Caco-2 (cell line): ENCODE measurements at regions of chr5 and their contacts with region 1.

Region 1: GRCh38 chr5:132277971-132278911 is 16.0 kb upstream of the SLC22A4 start:
- DNase-seq: peak; percentile 82 to 91
- H3K4me3 ChIP-seq: no peak overlapping the region
- H3K4me3 Mint-ChIP-seq: peak overlapping the region; percentile 13
- H3K27ac Mint-ChIP-seq: peak overlapping the region; percentile 45
- H3K4me1 ChIP-seq: peaks cover 46% of the 10 kb centered on the region
- H3K4me1 Mint-ChIP-seq: peaks cover 50% of the 10 kb centered on the region
- H3K27me3 ChIP-seq: no peaks in the 10 kb centered on the region
- H3K27me3 Mint-ChIP-seq: no peaks in the 10 kb centered on the region
- CTCF ChIP-seq: peak; percentile 13 to 37

Region 2: DNA sequence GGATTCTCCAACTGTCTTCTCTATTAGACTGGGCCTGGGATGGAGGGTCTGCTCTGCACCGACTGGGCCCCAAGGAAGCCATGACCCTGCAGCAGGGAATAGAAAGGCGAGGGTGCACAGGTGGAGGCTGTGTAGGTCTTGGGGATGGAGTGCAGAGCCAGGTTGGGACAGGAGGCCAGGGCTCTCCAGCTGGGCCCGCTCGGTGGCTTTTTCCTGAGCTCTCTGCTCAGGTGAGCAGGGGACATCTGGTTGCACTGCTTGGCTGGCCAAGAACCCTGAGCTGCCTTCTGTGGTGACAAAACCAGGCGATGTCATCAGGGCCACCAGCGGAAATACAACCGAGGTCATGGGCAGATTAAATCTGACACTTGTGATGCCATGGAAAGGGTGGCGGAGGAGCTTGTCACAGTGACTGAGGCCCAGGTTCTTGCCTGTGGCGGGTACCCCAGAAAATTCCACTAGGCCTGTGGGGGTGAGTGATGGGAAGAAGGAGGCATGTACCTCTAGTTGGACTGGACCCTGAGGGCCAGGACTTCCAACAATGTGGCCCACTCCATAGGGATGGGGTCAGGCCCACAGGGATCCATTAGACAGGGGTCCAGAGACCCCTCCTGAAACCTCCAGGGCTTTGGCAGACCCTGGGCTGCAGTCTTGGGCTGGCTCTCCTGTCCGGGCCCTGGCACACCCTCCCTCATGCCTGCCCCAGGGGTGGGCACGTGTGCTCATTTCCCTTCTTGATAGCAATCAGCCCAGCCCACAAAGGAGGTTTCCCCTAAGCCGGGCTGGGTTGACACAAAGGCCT is 222.2 kb before region 1 on chr5:
- CTCF ChIA-PET with region 1: no interaction called
- POLR2A ChIA-PET with region 1: no interaction called
- intact Hi-C with region 1: no loop called
- DNase-seq: peak in 1 of 2 experiments; percentile 25
- H3K4me3 ChIP-seq: no peak overlapping the region
- H3K4me3 Mint-ChIP-seq: no peak overlapping the region
- H3K27ac Mint-ChIP-seq: no peak overlapping the region
- H3K4me1 ChIP-seq: no peaks in the 10 kb centered on the region
- H3K4me1 Mint-ChIP-seq: no peaks in the 10 kb centered on the region
- H3K27me3 ChIP-seq: no peaks in the 10 kb centered on the region
- H3K27me3 Mint-ChIP-seq: peaks cover 14% of the 10 kb centered on the region
- CTCF ChIP-seq: no peak

Region 3: GRCh38 chr5:132342291-132343180 is 64.3 kb after region 1 on chr5:
- CTCF ChIA-PET with region 1: no interaction called
- POLR2A ChIA-PET with region 1: no interaction called
- intact Hi-C with region 1: no loop called
- DNase-seq: no peak
- H3K4me3 ChIP-seq: no peak overlapping the region
- H3K4me3 Mint-ChIP-seq: no peak overlapping the region
- H3K27ac Mint-ChIP-seq: no peak overlapping the region
- H3K4me1 ChIP-seq: peaks cover 14% of the 10 kb centered on the region; the same call in 1 of the 2 replicates
- H3K4me1 Mint-ChIP-seq: peaks cover 23% of the 10 kb centered on the region
- H3K27me3 ChIP-seq: no peaks in the 10 kb centered on the region
- H3K27me3 Mint-ChIP-seq: no peaks in the 10 kb centered on the region
- CTCF ChIP-seq: no peak

Region 4: DNA sequence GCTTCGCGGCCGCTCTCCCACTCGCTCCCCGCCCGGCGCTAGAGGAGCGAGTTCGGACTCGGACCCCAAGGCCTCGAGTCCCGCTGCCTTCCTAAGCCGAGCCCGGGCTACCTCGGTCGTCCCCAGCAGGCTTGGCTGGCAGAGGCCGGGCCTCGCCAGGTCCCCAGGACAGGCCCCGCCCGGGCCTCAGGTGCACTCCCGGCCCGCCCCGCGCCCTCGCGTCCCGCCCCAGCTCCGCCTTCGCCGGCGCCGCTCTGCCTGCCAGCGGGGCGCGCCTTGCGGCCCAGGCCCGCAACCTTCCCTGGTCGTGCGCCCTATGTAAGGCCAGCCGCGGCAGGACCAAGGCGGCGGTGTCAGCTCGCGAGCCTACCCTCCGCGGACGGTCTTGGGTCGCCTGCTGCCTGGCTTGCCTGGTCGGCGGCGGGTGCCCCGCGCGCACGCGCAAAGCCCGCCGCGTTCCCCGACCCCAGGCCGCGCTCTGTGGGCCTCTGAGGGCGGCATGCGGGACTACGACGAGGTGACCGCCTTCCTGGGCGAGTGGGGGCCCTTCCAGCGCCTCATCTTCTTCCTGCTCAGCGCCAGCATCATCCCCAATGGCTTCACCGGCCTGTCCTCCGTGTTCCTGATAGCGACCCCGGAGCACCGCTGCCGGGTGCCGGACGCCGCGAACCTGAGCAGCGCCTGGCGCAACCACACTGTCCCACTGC is 91.4 kb after region 1 on chr5 and contains the start of gene SLC22A5:
- CTCF ChIA-PET with region 1: interaction called, 3 read pairs
- POLR2A ChIA-PET with region 1: interaction called, 3 read pairs
- intact Hi-C with region 1: loop called (anchors 1 kb)
- DNase-seq: peak; percentile 86 to 90
- H3K4me3 ChIP-seq: peak within 1 kb of the TSS; percentile 79
- H3K4me3 Mint-ChIP-seq: peak within 1 kb of the TSS; percentile 79
- H3K27ac Mint-ChIP-seq: peak within 1 kb of the TSS; percentile 85
- H3K4me1 ChIP-seq: peaks cover 44% of the 10 kb centered on the region
- H3K4me1 Mint-ChIP-seq: peaks cover 21% of the 10 kb centered on the region
- H3K27me3 ChIP-seq: no peaks in the 10 kb centered on the region
- H3K27me3 Mint-ChIP-seq: no peaks in the 10 kb centered on the region
- CTCF ChIP-seq: no peak
- total RNA-seq, gene SLC22A5: 19.1 and 20.2 TPM in 2 replicates